ENCODE measurements at regions of chr17 and their contacts with region 1.

Region 1: GRCh38 chr17:77011173-77012011 is 129.4 kb upstream of the SEC14L1 start:
- DNase-seq: peak in 8 of 9 donors; percentile 18 to 53 (median 36)
- ATAC-seq: no peak
- H3K4me3 ChIP-seq: no peak overlapping the region
- H3K4me3 Mint-ChIP-seq: no peak overlapping the region
- H3K27ac ChIP-seq: no peak overlapping the region
- H3K27ac Mint-ChIP-seq: no peak overlapping the region
- H3K4me1 ChIP-seq: no peaks in the 10 kb centered on the region
- H3K4me1 Mint-ChIP-seq: peaks cover 0 to 7% (median 0%) of the 10 kb centered on the region in 7 donors
- H3K27me3 ChIP-seq: no peaks in the 10 kb centered on the region
- H3K27me3 Mint-ChIP-seq: peaks cover 0 to 42% (median 0%) of the 10 kb centered on the region in 5 donors

Region 2: GRCh38 chr17:76327696-76328095 is 683.7 kb before region 1 on chr17:
- CTCF ChIA-PET with region 1: no interaction called
- POLR2A ChIA-PET with region 1: no interaction called
- intact Hi-C with region 1: no loop called
- DNase-seq: no peak
- ATAC-seq: peak; percentile 76
- H3K4me3 ChIP-seq: no peak overlapping the region
- H3K4me3 Mint-ChIP-seq: no peak overlapping the region
- H3K27ac ChIP-seq: no peak overlapping the region
- H3K27ac Mint-ChIP-seq: no peak overlapping the region
- H3K4me1 ChIP-seq: no peaks in the 10 kb centered on the region
- H3K4me1 Mint-ChIP-seq: peaks cover 0 to 5% (median 0%) of the 10 kb centered on the region in 7 donors
- H3K27me3 ChIP-seq: no peaks in the 10 kb centered on the region
- H3K27me3 Mint-ChIP-seq: no peaks in the 10 kb centered on the region

Region 3: GRCh38 chr17:76868176-76868668 is 143.2 kb before region 1 on chr17 and contains the start of gene MGAT5B:
- CTCF ChIA-PET with region 1: interaction called, 5 read pairs
- POLR2A ChIA-PET with region 1: no interaction called
- intact Hi-C with region 1: loop called in 1 of 2 experiments (anchors 1 kb)
- DNase-seq: peak; percentile 57 to 91 (median 79)
- ATAC-seq: peak; percentile 96
- H3K4me3 ChIP-seq: peak within 1 kb of the TSS; percentile 20
- H3K4me3 Mint-ChIP-seq: peak within 1 kb of the TSS; percentile 60 to 86 (median 81)
- H3K27ac ChIP-seq: no peak within 1 kb of the TSS
- H3K27ac Mint-ChIP-seq: peak within 1 kb of the TSS in 3 of 9 donors; percentile 15 to 82 (median 76)
- H3K4me1 ChIP-seq: peaks cover 5 to 13% of the 10 kb centered on the region in 2 donors
- H3K4me1 Mint-ChIP-seq: peaks cover 4 to 13% (median 10%) of the 10 kb centered on the region in 7 donors
- H3K27me3 ChIP-seq: peaks cover 4 to 5% of the 10 kb centered on the region in 2 donors
- H3K27me3 Mint-ChIP-seq: peaks cover 14 to 45% (median 24%) of the 10 kb centered on the region in 5 donors
- total RNA-seq, gene MGAT5B: 0.24 to 3.7 (median 2.5) TPM

Region 4: DNA sequence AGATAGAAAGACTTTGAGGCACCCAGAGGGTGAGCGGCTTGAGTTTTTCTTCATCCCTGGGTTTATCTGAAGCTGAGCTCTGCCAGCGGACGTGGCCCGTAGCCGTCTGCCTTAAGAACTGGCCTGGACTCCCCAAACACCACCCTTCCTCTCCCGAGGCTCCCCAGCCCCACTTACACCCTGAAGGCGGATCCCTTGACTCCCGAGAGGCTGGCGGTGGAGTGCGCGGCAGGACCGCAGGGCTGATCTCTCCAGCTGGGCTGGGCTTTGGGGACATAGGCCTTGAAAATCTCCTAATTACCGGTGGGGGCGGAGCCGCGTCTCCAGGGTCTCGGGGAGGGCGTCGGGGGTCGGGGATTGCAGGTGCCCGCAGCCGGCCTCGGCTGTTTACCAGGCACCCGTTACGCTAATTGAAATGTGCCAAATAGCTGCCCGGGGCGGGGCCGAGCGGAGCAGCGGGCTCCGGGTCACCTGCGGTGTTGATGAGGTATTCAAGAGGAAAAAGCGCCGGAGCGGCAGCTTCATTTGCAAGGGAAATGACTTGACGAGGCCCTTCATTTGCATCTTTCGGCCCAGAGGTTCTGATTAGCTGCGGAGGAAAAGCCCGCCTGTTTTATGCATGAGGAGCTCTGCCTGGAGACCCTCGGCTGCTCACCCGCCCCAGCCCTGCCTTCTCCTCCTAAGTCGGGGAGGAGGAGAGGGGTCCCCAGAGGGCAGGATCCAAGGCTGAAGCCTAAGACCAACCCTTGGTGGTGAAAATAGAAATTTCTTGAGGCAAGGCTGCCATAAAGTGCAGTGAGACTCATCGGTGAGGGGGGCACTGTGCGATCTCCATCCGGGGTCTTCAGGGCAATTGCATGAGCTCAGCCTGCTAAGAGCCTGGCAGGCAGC is 42.4 kb before region 1 on chr17:
- CTCF ChIA-PET with region 1: interaction called, 3 read pairs
- POLR2A ChIA-PET with region 1: interaction called, 3 read pairs
- intact Hi-C with region 1: loop called in 1 of 2 experiments (anchors 2 kb)
- DNase-seq: peak; percentile 21 to 48 (median 36)
- ATAC-seq: peak; percentile 80
- H3K4me3 ChIP-seq: peak overlapping the region; percentile 59
- H3K4me3 Mint-ChIP-seq: peak overlapping the region; percentile 74 to 92 (median 86)
- H3K27ac ChIP-seq: peak overlapping the region; percentile 51
- H3K27ac Mint-ChIP-seq: peak overlapping the region; percentile 11 to 85 (median 54)
- H3K4me1 ChIP-seq: peaks cover 7 to 12% of the 10 kb centered on the region in 2 donors
- H3K4me1 Mint-ChIP-seq: peaks cover 9 to 37% (median 17%) of the 10 kb centered on the region in 7 donors
- H3K27me3 ChIP-seq: no peaks in the 10 kb centered on the region
- H3K27me3 Mint-ChIP-seq: peaks cover 0 to 56% (median 8%) of the 10 kb centered on the region in 5 donors

Region 5: DNA sequence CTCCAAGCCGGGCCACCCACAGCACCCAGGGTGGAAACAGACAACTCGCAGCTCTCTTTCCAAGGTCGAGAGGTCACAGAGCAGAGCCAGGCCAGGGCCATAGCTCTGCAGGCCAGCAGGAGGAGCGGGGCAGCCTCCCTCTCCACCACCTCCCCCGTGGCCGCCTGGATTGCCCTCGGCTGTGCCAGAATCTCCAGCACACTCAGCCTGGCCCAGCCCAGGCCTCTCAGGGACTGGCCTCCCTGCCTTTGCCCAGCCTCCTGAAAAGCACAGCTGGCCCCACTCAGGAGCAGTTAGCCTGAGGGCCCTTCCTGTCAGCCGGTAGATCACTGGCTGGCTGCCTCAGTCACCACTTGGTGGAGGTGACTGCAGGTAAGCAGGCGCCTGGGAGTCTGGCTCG is 43.5 kb after region 1 on chr17:
- CTCF ChIA-PET with region 1: interaction called, 5 read pairs
- POLR2A ChIA-PET with region 1: no interaction called
- intact Hi-C with region 1: loop called (anchors 1 kb)
- DNase-seq: no peak
- ATAC-seq: no peak
- H3K4me3 ChIP-seq: no peak overlapping the region
- H3K4me3 Mint-ChIP-seq: no peak overlapping the region
- H3K27ac ChIP-seq: no peak overlapping the region
- H3K27ac Mint-ChIP-seq: no peak overlapping the region
- H3K4me1 ChIP-seq: no peaks in the 10 kb centered on the region
- H3K4me1 Mint-ChIP-seq: peaks cover 0 to 5% (median 0%) of the 10 kb centered on the region in 7 donors
- H3K27me3 ChIP-seq: peaks cover 0 to 5% of the 10 kb centered on the region in 2 donors
- H3K27me3 Mint-ChIP-seq: peaks cover 4 to 21% (median 10%) of the 10 kb centered on the region in 5 donors

Region 6: GRCh38 chr17:77068915-77069314 is 57.5 kb after region 1 on chr17:
- CTCF ChIA-PET with region 1: interaction called, 3 read pairs
- POLR2A ChIA-PET with region 1: no interaction called
- intact Hi-C with region 1: loop called (anchors 2 kb)
- DNase-seq: no peak
- ATAC-seq: no peak
- H3K4me3 ChIP-seq: no peak overlapping the region
- H3K4me3 Mint-ChIP-seq: no peak overlapping the region
- H3K27ac ChIP-seq: no peak overlapping the region
- H3K27ac Mint-ChIP-seq: no peak overlapping the region
- H3K4me1 ChIP-seq: no peaks in the 10 kb centered on the region
- H3K4me1 Mint-ChIP-seq: peaks cover 0 to 6% (median 0%) of the 10 kb centered on the region in 7 donors
- H3K27me3 ChIP-seq: no peaks in the 10 kb centered on the region
- H3K27me3 Mint-ChIP-seq: peaks cover 18 to 42% (median 29%) of the 10 kb centered on the region in 5 donors

Region 7: GRCh38 chr17:77247048-77247541 is 235.7 kb after region 1 on chr17:
- CTCF ChIA-PET with region 1: no interaction called
- POLR2A ChIA-PET with region 1: no interaction called
- intact Hi-C with region 1: loop called in 1 of 2 experiments (anchors 1 kb)
- DNase-seq: peak; percentile 62 to 93 (median 83)
- ATAC-seq: peak; percentile 99
- H3K4me3 ChIP-seq: peak overlapping the region; percentile 35
- H3K4me3 Mint-ChIP-seq: peak overlapping the region; percentile 29 to 81 (median 66)
- H3K27ac ChIP-seq: no peak overlapping the region
- H3K27ac Mint-ChIP-seq: peak overlapping the region in 1 of 9 donors; percentile 61
- H3K4me1 ChIP-seq: peaks cover 0 to 5% of the 10 kb centered on the region in 2 donors
- H3K4me1 Mint-ChIP-seq: peaks cover 3 to 22% (median 7%) of the 10 kb centered on the region in 7 donors
- H3K27me3 ChIP-seq: no peaks in the 10 kb centered on the region
- H3K27me3 Mint-ChIP-seq: peaks cover 9 to 24% (median 13%) of the 10 kb centered on the region in 5 donors